ENCODE measurements at regions of chr2 and their contacts with region 1.

Region 1: DNA sequence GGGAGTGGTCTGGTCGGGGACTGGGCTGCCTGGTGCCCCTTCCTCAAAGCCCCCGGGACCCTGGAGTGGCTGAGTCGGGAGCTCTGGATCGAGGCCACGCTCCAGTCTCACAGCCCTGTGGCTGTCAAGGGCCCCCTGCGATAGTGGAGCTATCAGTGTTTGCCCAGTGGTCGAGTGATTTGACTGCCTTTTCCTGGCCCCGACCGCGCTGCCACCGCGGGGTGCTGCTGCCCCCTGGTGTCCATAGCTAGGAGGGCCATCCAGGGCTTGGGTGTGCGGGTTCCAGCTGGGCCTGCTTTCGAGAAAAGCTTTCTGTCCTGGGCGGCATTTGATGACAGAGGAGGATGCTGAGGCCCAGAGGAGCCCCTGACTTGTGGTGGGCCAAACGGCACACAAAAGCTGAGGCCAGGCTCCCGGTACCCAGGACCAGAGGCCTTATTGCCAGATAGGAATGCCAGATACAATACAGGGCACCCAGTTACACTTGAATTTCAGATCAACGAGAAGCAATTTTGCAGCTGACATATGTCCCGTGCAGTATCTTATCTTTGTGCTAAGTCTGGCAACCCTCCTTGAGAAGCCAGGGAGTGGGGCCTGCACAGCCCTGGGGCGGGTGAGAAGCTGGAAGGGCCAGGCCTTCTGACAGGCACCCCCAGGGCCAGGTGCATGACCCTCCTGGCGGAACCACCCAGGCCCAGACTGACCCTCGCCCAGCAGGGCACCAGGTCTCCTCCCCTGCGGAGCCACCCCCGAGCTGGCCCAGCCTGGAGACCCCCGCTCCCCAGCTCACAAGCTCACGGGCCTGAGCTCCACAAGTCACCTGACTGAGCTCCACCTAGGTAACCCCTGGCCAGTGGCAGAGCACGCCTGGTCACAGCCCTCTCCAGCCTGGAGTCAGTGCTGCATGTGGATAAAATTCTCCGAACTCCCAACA is 13.0 kb downstream of the ODC1 start:
- DNase-seq: peak; percentile 73 to 94 (median 82)
- ATAC-seq: peak; percentile 81
- H3K4me3 ChIP-seq: no peak overlapping the region
- H3K27ac ChIP-seq: no peak overlapping the region
- H3K4me1 ChIP-seq: peaks cover 7 to 23% of the 10 kb centered on the region in 2 donors
- H3K27me3 ChIP-seq: peaks cover 0 to 4% of the 10 kb centered on the region in 2 donors
- CTCF ChIP-seq: peak; percentile 95 to 97

Region 2: DNA sequence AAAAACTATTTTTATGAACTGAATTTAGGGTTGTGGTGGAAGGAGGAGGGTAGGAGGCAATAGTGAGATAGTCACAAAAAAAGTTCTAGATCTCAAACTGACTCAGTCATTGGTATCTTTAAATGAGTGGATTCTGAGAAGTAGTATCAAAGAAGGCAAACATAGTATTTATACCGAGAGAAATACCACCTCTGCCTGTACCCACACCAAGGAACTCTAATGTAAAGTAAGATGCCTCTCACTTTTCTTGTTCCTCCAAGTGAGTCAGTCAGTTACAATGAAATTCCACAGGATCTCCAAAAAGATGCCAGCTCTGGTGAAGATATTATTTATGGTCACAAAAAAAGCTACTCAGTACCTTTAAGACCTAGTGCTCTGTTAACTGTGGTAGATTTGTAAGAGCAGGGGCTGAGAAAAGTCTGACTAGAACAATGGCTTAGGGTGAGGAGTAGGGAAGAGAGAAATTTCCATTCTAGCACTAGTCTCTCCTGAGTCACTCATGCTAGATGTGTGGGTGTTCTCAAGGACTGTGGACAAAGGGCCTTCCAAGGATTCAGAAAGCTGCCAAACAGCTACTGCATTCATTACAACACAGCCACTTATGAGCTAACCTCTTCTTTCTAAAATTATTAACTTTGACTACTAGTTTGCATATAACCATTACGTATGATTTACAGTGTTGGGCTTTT is 840.6 kb before region 1 on chr2:
- intact Hi-C with region 1: no loop called
- DNase-seq: peak in 1 of 4 donors; percentile 47
- ATAC-seq: peak; percentile 96
- H3K4me3 ChIP-seq: no peak overlapping the region
- H3K27ac ChIP-seq: peak overlapping the region; percentile 59 to 84
- H3K4me1 ChIP-seq: peaks cover 8 to 53% of the 10 kb centered on the region in 2 donors
- H3K27me3 ChIP-seq: no peaks in the 10 kb centered on the region
- CTCF ChIP-seq: no peak

Region 3: DNA sequence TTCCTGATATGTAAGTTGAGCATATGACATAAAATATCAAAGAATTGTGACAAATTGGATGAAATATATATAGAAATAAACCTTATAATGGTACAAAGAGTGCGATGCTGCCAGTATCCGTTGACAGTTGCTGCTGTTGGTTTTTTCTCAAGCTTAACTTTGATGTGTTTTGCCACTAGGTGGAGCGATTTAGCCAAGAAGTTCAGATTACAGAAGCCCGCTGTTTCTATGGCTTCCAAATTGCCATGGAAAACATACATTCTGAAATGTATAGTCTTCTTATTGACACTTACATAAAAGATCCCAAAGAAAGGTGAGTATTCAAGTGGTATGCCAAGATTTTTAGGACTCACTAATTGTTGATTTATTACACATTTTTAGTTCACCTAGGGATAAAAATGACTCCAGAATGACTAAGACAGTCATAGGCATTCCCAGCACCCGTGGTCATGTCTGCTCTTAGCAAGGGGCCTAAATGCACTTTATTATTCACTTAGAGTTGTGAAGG is 310.6 kb before region 1 on chr2:
- intact Hi-C with region 1: loop called in 1 of 2 experiments (anchors 5 kb)
- DNase-seq: peak in 1 of 4 donors; percentile 84
- ATAC-seq: no peak
- H3K4me3 ChIP-seq: peak overlapping the region in 1 of 2 donors; percentile 72
- H3K27ac ChIP-seq: no peak overlapping the region
- H3K4me1 ChIP-seq: peaks cover 15 to 67% of the 10 kb centered on the region in 2 donors
- H3K27me3 ChIP-seq: peaks cover 0 to 23% of the 10 kb centered on the region in 2 donors
- CTCF ChIP-seq: peak; percentile 62 to 74

Region 4: GRCh38 chr2:10659898-10660568 is 224.9 kb after region 1 on chr2:
- intact Hi-C with region 1: loop called in 1 of 2 experiments (anchors 10 kb)
- DNase-seq: peak in 3 of 4 donors; percentile 8 to 44 (median 28)
- ATAC-seq: peak; percentile 94
- H3K4me3 ChIP-seq: no peak overlapping the region
- H3K27ac ChIP-seq: no peak overlapping the region
- H3K4me1 ChIP-seq: no peaks in the 10 kb centered on the region
- H3K27me3 ChIP-seq: no peaks in the 10 kb centered on the region
- CTCF ChIP-seq: peak; percentile 69 to 74

Measured in left lung (tissue), 14 donors.